Activated CD8-positive, alpha-beta T cell treated with anti-CD3 and anti-CD28 coated beads for 36 hours (primary cell): ENCODE measurements at regions of chr5 and their contacts with region 1.

Region 1: DNA sequence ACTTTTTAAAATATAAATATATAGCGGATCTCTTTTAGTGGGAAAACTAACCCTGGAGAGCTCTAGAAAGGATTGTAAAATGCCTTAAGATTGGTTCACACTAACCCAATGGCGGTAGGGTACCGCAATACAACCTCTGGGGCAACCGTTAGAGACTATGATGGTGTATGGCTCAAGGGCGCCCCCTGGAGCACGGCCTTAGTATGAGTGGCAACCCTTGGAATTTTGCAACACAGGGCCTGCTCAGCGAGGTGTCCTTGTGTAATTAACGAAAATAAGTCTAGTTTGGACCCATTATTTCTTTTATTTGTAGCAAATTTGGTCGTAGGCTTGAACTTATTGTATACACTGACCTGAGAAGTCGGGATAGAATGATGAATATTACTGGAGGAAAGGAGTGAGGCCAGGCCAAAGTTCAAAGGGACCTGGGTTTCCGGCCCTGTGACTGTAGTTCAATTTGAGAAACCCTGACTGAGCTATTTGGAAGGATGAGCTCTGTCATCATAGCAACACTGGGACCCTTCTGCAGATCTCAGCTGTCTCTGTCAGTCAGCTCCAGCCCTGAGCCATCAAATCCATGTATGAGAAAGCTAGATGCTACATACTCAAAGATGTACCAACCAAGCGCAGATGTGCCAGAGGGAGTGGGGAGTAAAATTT is 54.8 kb downstream of the CAMK4 start:
- DNase-seq: peak; percentile 95
- ATAC-seq: peak; percentile 98
- H3K4me3 Mint-ChIP-seq: no peak overlapping the region
- H3K27ac Mint-ChIP-seq: peak overlapping the region; percentile 83
- H3K4me1 Mint-ChIP-seq: peaks cover 71% of the 10 kb centered on the region
- H3K27me3 Mint-ChIP-seq: no peaks in the 10 kb centered on the region
- CTCF ChIP-seq: peak; percentile 87

Region 2: DNA sequence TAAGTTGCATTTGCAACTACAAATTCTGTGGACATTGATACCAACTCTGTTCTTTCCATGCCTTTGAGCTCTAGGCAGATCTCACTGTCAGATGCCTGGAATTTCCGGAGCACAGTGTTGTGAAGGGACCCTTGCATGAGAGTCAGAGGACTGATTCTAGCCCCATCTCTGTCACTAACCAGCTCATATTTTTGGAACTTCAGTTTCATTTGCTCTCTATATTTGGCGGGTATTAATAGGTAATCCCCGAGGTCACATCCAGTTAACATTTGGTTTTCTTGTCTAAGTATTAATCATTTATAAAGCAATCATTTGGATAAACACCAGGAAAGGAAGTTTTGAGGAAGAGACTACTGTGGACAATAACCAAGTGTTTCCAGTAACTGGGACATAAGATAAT is 1473.5 kb before region 1 on chr5:
- CTCF ChIA-PET with region 1: no interaction called
- POLR2A ChIA-PET with region 1: no interaction called
- intact Hi-C with region 1: no loop called
- DNase-seq: no peak
- ATAC-seq: no peak
- H3K4me3 Mint-ChIP-seq: no peak overlapping the region
- H3K27ac Mint-ChIP-seq: no peak overlapping the region
- H3K4me1 Mint-ChIP-seq: peaks cover 7% of the 10 kb centered on the region
- H3K27me3 Mint-ChIP-seq: no peaks in the 10 kb centered on the region
- CTCF ChIP-seq: no peak

Region 3: GRCh38 chr5:111143910-111144309 is 135.1 kb before region 1 on chr5:
- CTCF ChIA-PET with region 1: interaction called, 11 read pairs
- POLR2A ChIA-PET with region 1: no interaction called
- intact Hi-C with region 1: no loop called
- DNase-seq: no peak
- ATAC-seq: no peak
- H3K4me3 Mint-ChIP-seq: no peak overlapping the region
- H3K27ac Mint-ChIP-seq: no peak overlapping the region
- H3K4me1 Mint-ChIP-seq: peaks cover 10% of the 10 kb centered on the region
- H3K27me3 Mint-ChIP-seq: peaks cover 6% of the 10 kb centered on the region
- CTCF ChIP-seq: no peak

Region 4: GRCh38 chr5:111169269-111169668 is 109.7 kb before region 1 on chr5:
- CTCF ChIA-PET with region 1: interaction called, 228 read pairs
- POLR2A ChIA-PET with region 1: no interaction called
- intact Hi-C with region 1: no loop called
- DNase-seq: no peak
- ATAC-seq: no peak
- H3K4me3 Mint-ChIP-seq: no peak overlapping the region
- H3K27ac Mint-ChIP-seq: no peak overlapping the region
- H3K4me1 Mint-ChIP-seq: no peaks in the 10 kb centered on the region
- H3K27me3 Mint-ChIP-seq: peaks cover 1% of the 10 kb centered on the region
- CTCF ChIP-seq: no peak

Region 5: DNA sequence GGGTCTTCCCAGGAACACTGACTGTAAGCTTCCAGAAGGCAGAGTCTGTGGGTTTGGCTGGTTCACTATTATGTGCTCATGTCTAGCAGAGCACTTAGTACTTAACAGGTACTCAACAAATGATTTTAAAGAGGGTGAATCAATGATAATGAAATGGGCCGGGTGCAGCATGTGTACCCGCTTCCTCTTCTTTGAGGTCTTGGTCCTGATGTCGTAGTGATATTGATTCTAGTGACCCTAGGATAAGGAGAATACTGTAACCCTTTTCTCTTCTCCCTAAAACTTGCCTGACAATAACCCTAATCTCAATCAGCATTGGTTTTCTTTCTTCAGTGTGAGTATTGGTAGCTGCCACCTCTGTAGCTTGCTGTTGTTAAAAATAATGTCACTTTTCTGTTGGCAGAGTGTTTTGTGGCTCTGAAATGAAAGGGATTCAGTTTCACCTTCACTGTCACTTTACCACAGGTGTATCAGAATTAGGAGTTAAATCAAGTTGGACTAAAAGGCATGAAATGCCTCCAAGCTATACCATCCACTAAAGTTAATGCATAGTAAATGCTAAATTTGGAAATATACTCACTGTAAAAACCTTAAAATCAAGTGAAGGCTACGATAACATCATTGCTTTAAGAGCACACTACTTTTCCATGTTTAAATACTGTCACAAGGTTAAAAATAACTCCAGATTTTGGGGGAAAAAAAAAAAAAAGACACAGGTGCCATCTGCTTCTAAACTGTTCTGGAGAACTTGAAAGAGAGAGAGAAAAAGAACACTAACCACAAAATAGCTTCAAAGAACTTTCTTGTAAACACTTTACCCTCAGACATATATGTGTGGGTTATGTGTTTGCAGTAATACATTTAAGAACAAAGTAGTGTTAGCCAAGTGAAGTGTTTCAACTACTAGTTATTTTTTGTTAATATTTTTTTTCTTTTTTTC is 48.8 kb before region 1 on chr5:
- CTCF ChIA-PET with region 1: interaction called, 70 read pairs
- POLR2A ChIA-PET with region 1: interaction called, 6 read pairs
- intact Hi-C with region 1: loop called (anchors 5 kb)
- DNase-seq: peak; percentile 47
- ATAC-seq: peak; percentile 24
- H3K4me3 Mint-ChIP-seq: peak overlapping the region; percentile 76
- H3K27ac Mint-ChIP-seq: peak overlapping the region; percentile 99
- H3K4me1 Mint-ChIP-seq: peaks cover 70% of the 10 kb centered on the region
- H3K27me3 Mint-ChIP-seq: no peaks in the 10 kb centered on the region
- CTCF ChIP-seq: no peak

Region 6: GRCh38 chr5:111299067-111299481 is 20.1 kb after region 1 on chr5:
- CTCF ChIA-PET with region 1: interaction called, 11 read pairs
- POLR2A ChIA-PET with region 1: interaction called, 3 read pairs
- intact Hi-C with region 1: no loop called
- DNase-seq: no peak
- ATAC-seq: no peak
- H3K4me3 Mint-ChIP-seq: peak overlapping the region; percentile 19
- H3K27ac Mint-ChIP-seq: peak overlapping the region; percentile 90
- H3K4me1 Mint-ChIP-seq: peaks cover 55% of the 10 kb centered on the region
- H3K27me3 Mint-ChIP-seq: no peaks in the 10 kb centered on the region
- CTCF ChIP-seq: no peak

Region 7: GRCh38 chr5:111432883-111433536 is 154.0 kb after region 1 on chr5:
- CTCF ChIA-PET with region 1: no interaction called
- POLR2A ChIA-PET with region 1: no interaction called
- intact Hi-C with region 1: no loop called
- DNase-seq: no peak
- ATAC-seq: no peak
- H3K4me3 Mint-ChIP-seq: no peak overlapping the region
- H3K27ac Mint-ChIP-seq: peak overlapping the region; percentile 2
- H3K4me1 Mint-ChIP-seq: peaks cover 39% of the 10 kb centered on the region
- H3K27me3 Mint-ChIP-seq: no peaks in the 10 kb centered on the region
- CTCF ChIP-seq: no peak

Region 8: DNA sequence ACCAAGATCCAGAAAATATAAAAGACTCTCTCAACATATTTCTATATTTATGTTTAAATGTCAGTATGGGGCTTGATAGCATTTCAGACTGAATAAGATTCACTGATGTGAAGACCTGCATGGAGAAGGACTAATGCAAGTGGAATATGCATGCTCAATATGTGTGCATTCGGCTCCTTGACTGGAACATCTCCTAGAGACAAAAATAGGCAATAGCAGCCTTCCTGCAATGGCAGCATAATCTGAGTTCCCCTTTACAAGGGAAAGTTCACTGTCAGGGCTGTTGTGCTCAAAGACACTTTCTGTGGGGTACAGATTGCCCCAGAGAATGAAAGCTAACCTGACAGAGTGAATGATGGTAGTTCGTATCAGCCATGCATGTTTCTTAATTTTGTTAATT is 190.9 kb after region 1 on chr5:
- CTCF ChIA-PET with region 1: no interaction called
- POLR2A ChIA-PET with region 1: no interaction called
- intact Hi-C with region 1: no loop called
- DNase-seq: no peak
- ATAC-seq: no peak
- H3K4me3 Mint-ChIP-seq: no peak overlapping the region
- H3K27ac Mint-ChIP-seq: no peak overlapping the region
- H3K4me1 Mint-ChIP-seq: peaks cover 7% of the 10 kb centered on the region
- H3K27me3 Mint-ChIP-seq: no peaks in the 10 kb centered on the region
- CTCF ChIP-seq: no peak